GM12878 (cell line): ENCODE measurements at regions of chr18 and their contacts with region 1.

Region 1: GRCh38 chr18:35343936-35344735 is at the start of gene ZNF24:
- DNase-seq: peak; percentile 61
- ATAC-seq: peak; percentile 95
- H3K4me3 ChIP-seq: peak within 1 kb of the TSS; percentile 82
- H3K27ac ChIP-seq: peak within 1 kb of the TSS; percentile 98
- H3K4me1 ChIP-seq: peaks cover 7% of the 10 kb centered on the region; the same call in 1 of the 2 replicates
- H3K27me3 ChIP-seq: no peaks in the 10 kb centered on the region
- CTCF ChIP-seq: no peak
- EP300 ChIP-seq: 0 out of 4 replicates have a peak, but pooled peaks of 1 of the 2 experiments have one; percentile 21
- POLR2A ChIP-seq: peak; percentile 91
- RAD21 ChIP-seq: no peak
- polyA plus RNA-seq, gene ZNF24: 19.3 to 41.6 TPM

Region 2: DNA sequence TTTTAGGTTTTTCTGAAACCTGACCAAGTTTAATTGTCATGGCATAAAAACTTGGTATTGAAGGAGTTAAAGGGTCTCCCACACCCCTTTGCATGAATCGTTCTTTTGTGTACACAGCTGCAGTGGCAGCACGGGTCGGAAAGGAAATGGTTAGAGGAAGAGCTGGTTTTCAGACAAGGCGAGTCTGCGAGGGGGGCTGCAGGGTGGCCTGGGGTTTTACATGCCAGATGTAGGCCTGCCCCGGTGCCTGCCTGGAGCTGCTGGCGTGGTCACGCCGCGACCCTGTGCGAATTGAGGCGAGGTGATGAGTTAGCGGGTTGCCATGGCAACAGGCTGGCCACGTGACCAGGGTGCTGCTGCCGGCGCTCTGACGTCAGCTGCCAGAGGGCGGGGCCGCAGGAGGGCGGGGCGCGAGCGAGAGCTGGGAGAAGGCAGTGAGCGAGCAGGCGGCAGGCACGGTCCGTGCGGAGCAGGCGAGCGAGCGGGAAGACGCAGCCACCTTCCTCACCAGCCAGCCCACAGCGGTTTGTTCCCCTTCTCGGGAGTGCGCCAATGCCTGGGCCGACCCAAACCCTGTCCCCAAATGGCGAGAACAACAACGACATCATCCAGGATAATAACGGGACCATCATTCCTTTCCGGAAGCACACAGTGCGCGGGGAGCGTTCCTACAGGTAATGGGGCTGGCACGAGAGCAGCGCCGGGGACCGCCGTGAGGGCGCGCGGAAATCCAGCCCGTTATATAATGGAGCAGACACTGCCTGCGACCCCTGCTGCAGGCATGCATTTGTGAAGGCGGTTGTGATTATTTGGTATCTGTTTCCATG is 302.9 kb before region 1 on chr18 and contains the start of gene MAPRE2:
- CTCF ChIA-PET with region 1: no interaction called
- POLR2A ChIA-PET with region 1: interaction called, 3 read pairs
- RAD21 ChIA-PET with region 1: no interaction called
- SMC1A ChIA-PET with region 1: no interaction called
- in situ Hi-C with region 1: no loop called
- intact Hi-C with region 1: loop called (anchors 10 kb)
- DNase-seq: peak; percentile 82
- ATAC-seq: peak; percentile 84
- H3K4me3 ChIP-seq: peak within 1 kb of the TSS; percentile 78
- H3K27ac ChIP-seq: peak within 1 kb of the TSS; percentile 66
- H3K4me1 ChIP-seq: peaks cover 12% of the 10 kb centered on the region; the same call in 1 of the 2 replicates
- H3K27me3 ChIP-seq: no peaks in the 10 kb centered on the region
- CTCF ChIP-seq: no peak
- EP300 ChIP-seq: peak in 1 of 2 experiments; percentile 43; a peak in 2 of 4 replicates
- POLR2A ChIP-seq: peak; percentile 99
- RAD21 ChIP-seq: no peak
- polyA plus RNA-seq, gene MAPRE2: 11.0 to 16.3 TPM

Region 3: DNA sequence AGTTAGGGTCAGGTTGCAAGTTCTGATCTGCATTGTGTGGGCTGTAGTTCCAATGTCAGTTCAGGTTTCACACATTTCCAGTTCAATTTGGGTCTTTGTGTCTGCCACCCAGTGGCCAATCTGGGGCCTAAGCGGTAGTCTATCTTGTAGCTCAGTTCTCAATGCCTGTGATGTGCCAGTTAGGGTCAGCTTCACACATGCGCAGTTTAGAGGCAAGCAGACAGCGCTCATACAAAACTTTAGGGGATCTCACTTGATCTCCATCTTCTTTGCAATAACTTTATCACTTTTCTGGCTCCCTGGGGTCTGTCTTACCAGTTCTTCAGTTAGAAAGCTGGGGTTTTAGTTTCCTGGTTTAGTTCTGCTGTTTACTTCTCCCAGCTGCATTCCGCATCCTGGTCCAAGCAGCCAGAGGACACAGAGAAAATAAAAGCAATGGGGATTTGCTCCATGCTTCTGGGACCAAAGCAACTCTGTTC is 11.0 kb after region 1 on chr18:
- CTCF ChIA-PET with region 1: interaction called, 41 read pairs
- POLR2A ChIA-PET with region 1: no interaction called
- RAD21 ChIA-PET with region 1: interaction called, 17 read pairs
- SMC1A ChIA-PET with region 1: interaction called, 21 read pairs
- in situ Hi-C with region 1: no loop called
- intact Hi-C with region 1: no loop called
- DNase-seq: no peak
- ATAC-seq: peak; percentile 100
- H3K4me3 ChIP-seq: no peak overlapping the region
- H3K27ac ChIP-seq: no peak overlapping the region
- H3K4me1 ChIP-seq: no peaks in the 10 kb centered on the region
- H3K27me3 ChIP-seq: no peaks in the 10 kb centered on the region
- CTCF ChIP-seq: peak; percentile 73 to 76 (median 76)
- EP300 ChIP-seq: no peak
- POLR2A ChIP-seq: no peak
- RAD21 ChIP-seq: peak; percentile 67